Left lung (tissue), 14 donors: ENCODE measurements at regions of chr18 and their contacts with region 1.

Region 1: GRCh38 chr18:32158108-32158624 is 31.7 kb upstream of the MEP1B start:
- DNase-seq: peak in 3 of 4 donors; percentile 72 to 93 (median 78)
- ATAC-seq: peak; percentile 100
- H3K4me3 ChIP-seq: peak overlapping the region in 1 of 2 donors; percentile 0
- H3K27ac ChIP-seq: no peak overlapping the region
- H3K4me1 ChIP-seq: peaks cover 9 to 11% of the 10 kb centered on the region in 2 donors
- H3K27me3 ChIP-seq: peaks cover 0 to 11% of the 10 kb centered on the region in 2 donors
- CTCF ChIP-seq: peak; percentile 77 to 85

Region 2: GRCh38 chr18:32552421-32553030 is 394.4 kb after region 1 on chr18:
- intact Hi-C with region 1: loop called in 1 of 2 experiments (anchors 5 kb)
- DNase-seq: peak in 2 of 4 donors; percentile 35 to 40
- ATAC-seq: peak; percentile 95
- H3K4me3 ChIP-seq: no peak overlapping the region
- H3K27ac ChIP-seq: no peak overlapping the region
- H3K4me1 ChIP-seq: no peaks in the 10 kb centered on the region
- H3K27me3 ChIP-seq: no peaks in the 10 kb centered on the region
- CTCF ChIP-seq: peak; percentile 64 to 76